ENCODE measurements at regions of chr1 and their contacts with region 1.

Region 1: GRCh38 chr1:202810615-202811295 is at the start of gene PCAT6:
- DNase-seq: peak; percentile 91
- ATAC-seq: peak; percentile 69
- H3K4me3 Mint-ChIP-seq: peak within 1 kb of the TSS; percentile 95
- H3K27ac Mint-ChIP-seq: peak within 1 kb of the TSS; percentile 91
- H3K4me1 Mint-ChIP-seq: peaks cover 38% of the 10 kb centered on the region
- H3K27me3 Mint-ChIP-seq: peaks cover 33% of the 10 kb centered on the region
- total RNA-seq, gene PCAT6: 0.61 TPM in 1 of 2 experiments, not detected in the other

Region 2: GRCh38 chr1:202697038-202697437 is 113.7 kb before region 1 on chr1:
- POLR2A ChIA-PET with region 1: no interaction called
- DNase-seq: no peak
- ATAC-seq: no peak
- H3K4me3 Mint-ChIP-seq: no peak overlapping the region
- H3K27ac Mint-ChIP-seq: no peak overlapping the region
- H3K4me1 Mint-ChIP-seq: peaks cover 6% of the 10 kb centered on the region
- H3K27me3 Mint-ChIP-seq: peaks cover 48% of the 10 kb centered on the region

Region 3: DNA sequence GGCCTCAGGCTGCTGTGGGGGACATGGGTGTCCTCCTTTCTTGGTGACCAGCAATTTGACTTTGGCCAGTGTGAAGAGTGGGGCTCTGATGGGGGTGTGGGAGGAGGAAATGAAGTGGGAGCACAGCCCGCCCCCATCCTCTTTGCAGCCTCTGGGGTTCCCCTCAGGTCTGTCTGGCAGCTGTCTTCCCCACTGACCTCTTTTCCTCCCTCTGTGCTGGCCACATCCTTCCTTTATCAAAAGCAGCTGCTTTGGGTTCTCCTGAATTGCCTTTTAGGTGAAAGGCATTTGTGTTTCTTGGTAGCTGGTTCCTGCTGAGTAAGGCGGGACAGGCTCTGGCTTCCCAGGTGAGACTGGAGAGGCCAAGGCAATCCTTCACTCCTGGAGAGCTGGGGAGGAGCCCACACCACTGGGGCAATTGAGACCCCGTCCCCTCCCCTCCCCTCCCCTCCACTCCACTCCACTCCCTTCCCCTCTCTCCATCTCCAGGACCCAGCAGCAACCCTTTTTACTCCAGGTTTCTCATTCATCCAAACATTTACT is 24.9 kb after region 1 on chr1:
- POLR2A ChIA-PET with region 1: interaction called, 17 read pairs
- DNase-seq: peak; percentile 54
- ATAC-seq: peak; percentile 90
- H3K4me3 Mint-ChIP-seq: peak overlapping the region; percentile 81
- H3K27ac Mint-ChIP-seq: peak overlapping the region; percentile 47
- H3K4me1 Mint-ChIP-seq: peaks cover 49% of the 10 kb centered on the region
- H3K27me3 Mint-ChIP-seq: no peaks in the 10 kb centered on the region